GM12878 (cell line): ENCODE measurements at regions of chr3 and their contacts with region 1.

Region 1: GRCh38 chr3:189288348-189289235 is 116.8 kb downstream of the TPRG1 start:
- DNase-seq: peak; percentile 73
- ATAC-seq: peak; percentile 90
- H3K4me3 ChIP-seq: peak overlapping the region; percentile 60
- H3K27ac ChIP-seq: peak overlapping the region; percentile 72
- H3K4me1 ChIP-seq: peaks cover 31% of the 10 kb centered on the region
- H3K27me3 ChIP-seq: peaks cover 0 to 2% of the 10 kb centered on the region in 2 experiments; a peak in 1 of 4 replicates
- CTCF ChIP-seq: no peak
- EP300 ChIP-seq: peak; percentile 58 to 70; a peak in 3 of 4 replicates
- POLR2A ChIP-seq: no peak
- RAD21 ChIP-seq: peak; percentile 10; the same call in 1 of the 2 replicates

Region 2: GRCh38 chr3:189276481-189277219 is 11.9 kb before region 1 on chr3:
- CTCF ChIA-PET with region 1: interaction called, 21 read pairs
- POLR2A ChIA-PET with region 1: no interaction called
- RAD21 ChIA-PET with region 1: interaction called, 7 read pairs
- SMC1A ChIA-PET with region 1: interaction called, 17 read pairs
- in situ Hi-C with region 1: no loop called
- intact Hi-C with region 1: no loop called
- DNase-seq: no peak
- ATAC-seq: peak; percentile 48
- H3K4me3 ChIP-seq: no peak overlapping the region
- H3K27ac ChIP-seq: no peak overlapping the region
- H3K4me1 ChIP-seq: peaks cover 11% of the 10 kb centered on the region; the same call in 1 of the 2 replicates
- H3K27me3 ChIP-seq: 0 out of 4 replicates have a peak, but pooled peaks cover 0 to 1% of the 10 kb centered on the region in 2 experiments
- CTCF ChIP-seq: no peak
- EP300 ChIP-seq: no peak
- POLR2A ChIP-seq: no peak
- RAD21 ChIP-seq: no peak

Region 3: GRCh38 chr3:189307963-189308362 is 19.4 kb after region 1 on chr3:
- CTCF ChIA-PET with region 1: interaction called, 3 read pairs
- POLR2A ChIA-PET with region 1: no interaction called
- RAD21 ChIA-PET with region 1: interaction called, 4 read pairs
- SMC1A ChIA-PET with region 1: interaction called, 10 read pairs
- in situ Hi-C with region 1: no loop called
- intact Hi-C with region 1: no loop called
- DNase-seq: no peak
- ATAC-seq: peak; percentile 46
- H3K4me3 ChIP-seq: peak overlapping the region; percentile 36
- H3K27ac ChIP-seq: peak overlapping the region; percentile 66
- H3K4me1 ChIP-seq: peaks cover 26% of the 10 kb centered on the region
- H3K27me3 ChIP-seq: no peaks in the 10 kb centered on the region
- CTCF ChIP-seq: no peak
- EP300 ChIP-seq: no peak
- POLR2A ChIP-seq: no peak
- RAD21 ChIP-seq: no peak

Region 4: DNA sequence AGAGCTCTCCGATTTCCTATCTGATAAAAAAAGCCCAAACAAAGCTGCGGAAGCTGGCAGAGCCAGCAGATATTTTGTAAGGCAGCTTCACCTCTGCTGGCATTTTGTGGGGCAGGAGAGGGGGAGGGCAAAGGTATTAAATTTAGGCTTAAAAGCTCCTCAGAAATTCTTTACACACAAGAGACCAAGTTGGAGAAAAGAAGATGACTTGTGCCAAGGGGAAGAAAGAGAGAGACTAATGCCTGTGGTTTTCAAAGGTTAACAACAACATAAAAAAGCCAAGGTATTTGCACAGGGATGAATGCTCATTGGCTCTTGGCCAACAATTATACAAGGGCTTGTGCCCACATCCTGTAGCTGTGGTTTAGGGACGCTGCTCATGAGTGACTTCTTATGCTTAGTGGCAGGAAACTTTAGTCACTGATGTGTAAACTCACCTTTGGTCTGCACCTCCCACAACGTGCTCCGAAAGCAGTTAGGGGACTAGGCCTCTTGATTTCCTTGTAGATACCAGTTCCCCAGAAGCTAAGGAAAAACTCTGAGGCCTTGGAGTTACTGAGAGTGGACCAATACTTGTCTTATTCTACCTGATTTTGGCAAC is 36.0 kb after region 1 on chr3:
- CTCF ChIA-PET with region 1: interaction called, 4 read pairs
- POLR2A ChIA-PET with region 1: no interaction called
- RAD21 ChIA-PET with region 1: interaction called, 6 read pairs
- SMC1A ChIA-PET with region 1: interaction called, 11 read pairs
- in situ Hi-C with region 1: no loop called
- intact Hi-C with region 1: loop called (anchors 1 kb)
- DNase-seq: peak; percentile 94
- ATAC-seq: peak; percentile 100
- H3K4me3 ChIP-seq: no peak overlapping the region
- H3K27ac ChIP-seq: peak overlapping the region; percentile 44; the same call in 1 of the 2 replicates
- H3K4me1 ChIP-seq: peaks cover 15% of the 10 kb centered on the region
- H3K27me3 ChIP-seq: no peaks in the 10 kb centered on the region
- CTCF ChIP-seq: no peak
- EP300 ChIP-seq: peak in 1 of 2 experiments; percentile 69; a peak in 1 of 4 replicates
- POLR2A ChIP-seq: no peak
- RAD21 ChIP-seq: 0 out of 2 replicates have a peak, but pooled peaks have one; percentile 14

Region 5: GRCh38 chr3:189340672-189341460 is 52.3 kb after region 1 on chr3:
- CTCF ChIA-PET with region 1: no interaction called
- POLR2A ChIA-PET with region 1: no interaction called
- RAD21 ChIA-PET with region 1: no interaction called
- SMC1A ChIA-PET with region 1: no interaction called
- in situ Hi-C with region 1: no loop called
- intact Hi-C with region 1: loop called (anchors 5 kb)
- DNase-seq: no peak
- ATAC-seq: peak; percentile 68
- H3K4me3 ChIP-seq: no peak overlapping the region
- H3K27ac ChIP-seq: no peak overlapping the region
- H3K4me1 ChIP-seq: no peaks in the 10 kb centered on the region
- H3K27me3 ChIP-seq: no peaks in the 10 kb centered on the region
- CTCF ChIP-seq: peak; percentile 44 to 47 (median 45)
- EP300 ChIP-seq: no peak
- POLR2A ChIP-seq: no peak
- RAD21 ChIP-seq: peak; percentile 49